K562 (cell line): ENCODE measurements at regions of chr6 and their contacts with region 1.

Region 1: DNA sequence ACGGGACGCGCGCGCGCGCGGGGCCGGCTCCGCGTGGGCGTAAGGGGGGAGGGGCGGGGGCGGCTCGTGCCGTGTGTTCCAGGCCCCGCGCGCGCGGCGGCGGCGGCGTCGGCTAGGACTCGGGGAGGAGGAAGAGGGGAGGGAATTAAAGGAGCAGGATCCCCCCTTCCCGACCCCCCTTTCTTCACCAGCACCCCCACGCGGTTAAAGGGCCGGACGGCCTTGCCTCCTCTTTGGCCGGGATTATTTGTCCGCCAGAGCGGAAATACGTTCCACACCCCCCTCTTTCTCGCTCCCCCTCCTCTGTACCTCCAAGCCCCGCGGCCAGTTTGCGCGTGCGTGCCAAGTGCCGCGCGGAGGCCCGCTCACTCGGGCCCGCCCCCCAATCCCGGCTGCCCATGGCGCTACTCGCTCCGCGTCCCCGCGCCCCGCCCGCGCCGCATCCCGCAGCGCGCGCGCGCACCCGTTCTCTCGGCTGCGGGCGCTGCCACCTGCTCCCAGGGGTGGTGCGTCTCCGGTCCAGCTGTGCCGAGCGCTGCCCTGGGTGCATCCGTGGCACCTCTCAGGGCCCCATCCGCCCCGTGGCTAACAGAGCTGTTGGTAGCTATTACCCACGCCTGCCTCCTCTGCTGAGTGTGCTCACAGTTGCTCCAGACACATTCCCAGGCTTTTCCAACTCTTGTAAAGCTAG is at the start of gene ZBTB12:
- DNase-seq: peak; percentile 98
- ATAC-seq: peak; percentile 84
- H3K4me3 ChIP-seq: peak within 1 kb of the TSS; percentile 75
- H3K27ac ChIP-seq: peak within 1 kb of the TSS; percentile 84
- H3K4me1 ChIP-seq: peaks cover 31 to 36% of the 10 kb centered on the region in 2 experiments; a peak in 4 of 5 replicates
- H3K27me3 ChIP-seq: no peaks in the 10 kb centered on the region
- CTCF ChIP-seq: peak in 1 of 3 experiments; percentile 15; a peak in 1 of 6 replicates
- EP300 ChIP-seq: no peak
- POLR2A ChIP-seq: peak; percentile 72
- RAD21 ChIP-seq: peak; percentile 41 to 50
- polyA plus RNA-seq, gene ZBTB12: 0.03 TPM in 1 of 2 experiments, not detected in the other

Region 2: DNA sequence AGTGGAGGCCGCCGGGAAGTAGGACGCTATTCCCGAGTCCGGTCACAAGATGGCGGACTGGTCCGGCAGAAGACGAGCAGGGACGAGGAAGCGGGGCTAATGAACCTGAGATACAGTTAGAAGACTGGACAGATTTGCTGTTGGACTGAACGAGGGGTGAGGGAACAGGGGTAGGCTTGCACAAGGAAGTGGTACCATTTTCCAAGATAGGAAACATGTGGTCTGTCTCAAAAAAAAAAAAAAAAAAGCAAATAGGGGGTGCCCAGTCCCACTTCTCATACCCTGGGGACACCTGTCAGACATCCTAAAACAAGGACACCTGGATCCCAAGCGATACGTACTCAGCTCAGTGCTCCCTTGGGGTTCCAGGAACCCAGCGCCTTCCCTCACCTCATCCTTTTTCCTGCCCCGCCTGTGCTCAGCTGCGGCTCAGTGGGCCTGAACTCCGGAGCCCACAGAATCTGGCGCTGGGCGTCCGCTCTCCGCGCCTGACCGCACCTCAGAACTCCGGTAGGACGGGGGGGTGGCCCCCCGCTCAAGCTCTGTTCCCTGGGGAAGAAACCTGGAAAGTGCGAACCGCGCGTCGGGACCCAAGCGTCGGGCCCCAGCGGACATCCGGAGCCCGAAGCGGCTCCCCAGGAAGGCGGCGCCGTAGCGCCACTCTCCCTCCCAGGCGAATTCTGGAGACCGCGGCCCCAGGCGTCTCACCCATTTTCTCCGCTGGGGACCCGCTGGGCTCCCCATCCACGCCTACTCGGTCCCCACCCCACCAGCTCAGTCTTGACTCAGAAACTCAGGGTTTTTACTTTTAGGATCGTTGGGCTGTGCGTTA is 221.0 kb before region 1 on chr6 and contains the start of gene LY6G5C:
- CTCF ChIA-PET with region 1: no interaction called
- POLR2A ChIA-PET with region 1: no interaction called
- in situ Hi-C with region 1: no loop called
- intact Hi-C with region 1: no loop called
- DNase-seq: peak; percentile 82 to 94 (median 88)
- ATAC-seq: peak; percentile 88
- H3K4me3 ChIP-seq: no peak within 1 kb of the TSS
- H3K27ac ChIP-seq: no peak within 1 kb of the TSS
- H3K4me1 ChIP-seq: peaks cover 10 to 24% of the 10 kb centered on the region in 2 experiments
- H3K27me3 ChIP-seq: no peaks in the 10 kb centered on the region
- CTCF ChIP-seq: peak; percentile 96 to 99 (median 99)
- EP300 ChIP-seq: peak; percentile 39; the same call in 1 of the 2 replicates
- POLR2A ChIP-seq: no peak
- RAD21 ChIP-seq: peak; percentile 99 to 100
- polyA plus RNA-seq, gene LY6G5C: 0.10 TPM in 1 of 2 experiments, not detected in the other

Region 3: DNA sequence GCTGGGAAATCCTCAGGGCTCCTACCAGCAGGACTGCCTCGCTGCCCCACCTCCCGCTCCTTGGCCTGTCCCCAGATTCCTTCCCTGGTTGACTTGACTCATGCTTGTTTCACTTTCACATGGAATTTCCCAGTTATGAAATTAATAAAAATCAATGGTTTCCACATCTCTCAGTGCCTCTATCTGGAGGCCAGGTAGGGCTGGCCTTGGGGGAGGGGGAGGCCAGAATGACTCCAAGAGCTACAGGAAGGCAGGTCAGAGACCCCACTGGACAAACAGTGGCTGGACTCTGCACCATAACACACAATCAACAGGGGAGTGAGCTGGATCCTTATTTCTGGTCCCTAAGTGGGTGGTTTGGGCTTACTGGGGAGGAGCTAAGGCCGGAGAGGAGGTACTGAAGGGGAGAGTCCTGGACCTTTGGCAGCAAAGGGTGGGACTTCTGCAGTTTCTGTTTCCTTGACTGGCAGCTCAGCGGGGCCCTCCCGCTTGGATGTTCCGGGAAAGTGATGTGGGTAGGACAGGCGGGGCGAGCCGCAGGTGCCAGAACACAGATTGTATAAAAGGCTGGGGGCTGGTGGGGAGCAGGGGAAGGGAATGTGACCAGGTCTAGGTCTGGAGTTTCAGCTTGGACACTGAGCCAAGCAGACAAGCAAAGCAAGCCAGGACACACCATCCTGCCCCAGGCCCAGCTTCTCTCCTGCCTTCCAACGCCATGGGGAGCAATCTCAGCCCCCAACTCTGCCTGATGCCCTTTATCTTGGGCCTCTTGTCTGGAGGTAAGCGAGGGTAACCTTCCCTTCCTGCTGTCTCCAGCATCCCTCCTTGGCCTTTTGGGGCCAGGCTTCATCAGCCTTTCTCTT is 43.6 kb after region 1 on chr6 and contains the start of gene CFB:
- CTCF ChIA-PET with region 1: no interaction called
- POLR2A ChIA-PET with region 1: interaction called, 10 read pairs
- in situ Hi-C with region 1: no loop called
- intact Hi-C with region 1: loop called (anchors 5 kb)
- DNase-seq: peak in 1 of 4 experiments; percentile 8
- ATAC-seq: no peak
- H3K4me3 ChIP-seq: no peak within 1 kb of the TSS
- H3K27ac ChIP-seq: no peak within 1 kb of the TSS
- H3K4me1 ChIP-seq: peaks cover 18 to 26% of the 10 kb centered on the region in 2 experiments
- H3K27me3 ChIP-seq: peaks cover 2 to 26% of the 10 kb centered on the region in 2 experiments; a peak in 3 of 5 replicates
- CTCF ChIP-seq: no peak
- EP300 ChIP-seq: no peak
- POLR2A ChIP-seq: no peak
- RAD21 ChIP-seq: no peak
- polyA plus RNA-seq, gene CFB: 0.08 to 0.38 TPM

Region 4: DNA sequence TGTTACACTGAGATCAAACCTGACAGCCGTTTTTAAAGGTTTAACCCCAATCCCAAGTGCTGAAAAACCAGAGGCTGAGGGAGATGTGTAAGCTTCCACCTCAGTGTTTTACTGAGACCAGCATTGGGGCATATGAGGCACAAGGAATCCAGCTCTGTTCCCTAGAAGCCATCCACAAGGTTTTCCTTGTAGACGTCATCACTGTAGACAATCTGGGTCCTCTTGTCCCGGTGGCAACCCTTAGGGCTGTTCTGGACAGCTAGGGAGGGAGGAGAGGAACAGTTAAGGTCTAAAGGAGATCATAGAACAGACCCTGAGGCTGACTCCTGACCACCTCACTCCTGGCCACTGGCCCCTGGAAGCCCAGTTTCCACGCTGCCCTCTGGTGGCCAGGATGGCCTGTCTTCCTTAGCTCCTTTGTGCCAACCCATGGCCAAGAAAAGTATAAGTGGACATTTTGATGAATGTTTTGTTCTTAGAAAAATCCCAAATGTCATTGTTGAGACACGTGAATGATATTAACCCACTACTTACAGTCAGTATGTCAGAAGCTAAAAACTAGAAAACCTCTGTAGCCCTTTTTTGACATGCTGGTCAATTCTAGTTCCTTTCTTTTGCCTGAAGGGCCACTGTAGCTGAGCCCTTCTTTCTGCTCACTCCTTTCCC is 50.2 kb after region 1 on chr6:
- CTCF ChIA-PET with region 1: no interaction called
- POLR2A ChIA-PET with region 1: interaction called, 10 read pairs
- in situ Hi-C with region 1: no loop called
- intact Hi-C with region 1: loop called (anchors 5 kb)
- DNase-seq: peak; percentile 71 to 78 (median 73)
- ATAC-seq: peak; percentile 86
- H3K4me3 ChIP-seq: no peak overlapping the region
- H3K27ac ChIP-seq: 0 out of 3 replicates have a peak overlapping the region, but pooled peaks have one; percentile 4
- H3K4me1 ChIP-seq: peaks cover 17 to 24% of the 10 kb centered on the region in 2 experiments
- H3K27me3 ChIP-seq: no peaks in the 10 kb centered on the region; a peak in 1 of 5 replicates
- CTCF ChIP-seq: peak; percentile 94 to 97 (median 94)
- EP300 ChIP-seq: no peak
- POLR2A ChIP-seq: no peak
- RAD21 ChIP-seq: peak; percentile 68 to 85

Region 5: GRCh38 chr6:32076321-32076809 is 174.3 kb after region 1 on chr6:
- CTCF ChIA-PET with region 1: no interaction called
- POLR2A ChIA-PET with region 1: no interaction called
- in situ Hi-C with region 1: no loop called
- intact Hi-C with region 1: no loop called
- DNase-seq: no peak
- ATAC-seq: no peak
- H3K4me3 ChIP-seq: no peak overlapping the region
- H3K27ac ChIP-seq: no peak overlapping the region
- H3K4me1 ChIP-seq: peaks cover 9 to 11% of the 10 kb centered on the region in 2 experiments
- H3K27me3 ChIP-seq: peaks cover 31 to 48% of the 10 kb centered on the region in 2 experiments
- CTCF ChIP-seq: no peak
- EP300 ChIP-seq: no peak
- POLR2A ChIP-seq: no peak
- RAD21 ChIP-seq: no peak

Region 6: GRCh38 chr6:33467091-33467490 is 1565.0 kb after region 1 on chr6:
- CTCF ChIA-PET with region 1: no interaction called
- POLR2A ChIA-PET with region 1: no interaction called
- in situ Hi-C with region 1: no loop called
- intact Hi-C with region 1: no loop called
- DNase-seq: no peak
- ATAC-seq: no peak
- H3K4me3 ChIP-seq: no peak overlapping the region
- H3K27ac ChIP-seq: no peak overlapping the region
- H3K4me1 ChIP-seq: no peaks in the 10 kb centered on the region; a peak in 1 of 5 replicates
- H3K27me3 ChIP-seq: no peaks in the 10 kb centered on the region
- CTCF ChIP-seq: no peak
- EP300 ChIP-seq: no peak
- POLR2A ChIP-seq: no peak
- RAD21 ChIP-seq: no peak